Activated naive CD8-positive, alpha-beta T cell treated with anti-CD3 and anti-CD28 coated beads, Interleukin-2, amount 10 ng/mL, durations not matched to agents 7 days and 5 days (primary cell): ENCODE measurements at regions of chr5 and their contacts with region 1.

Region 1: GRCh38 chr5:42950440-42951292 is 89.5 kb downstream of the ANXA2R start:
- DNase-seq: peak; percentile 35
- ATAC-seq: peak; percentile 38
- H3K4me3 Mint-ChIP-seq: peak overlapping the region; percentile 96
- H3K27ac Mint-ChIP-seq: peak overlapping the region; percentile 100
- H3K4me1 Mint-ChIP-seq: peaks cover 20% of the 10 kb centered on the region
- H3K27me3 Mint-ChIP-seq: no peaks in the 10 kb centered on the region

Region 2: GRCh38 chr5:42908509-42909488 is 41.9 kb before region 1 on chr5:
- POLR2A ChIA-PET with region 1: interaction called, 28 read pairs
- DNase-seq: peak; percentile 84
- ATAC-seq: peak; percentile 91
- H3K4me3 Mint-ChIP-seq: peak overlapping the region; percentile 82
- H3K27ac Mint-ChIP-seq: peak overlapping the region; percentile 55
- H3K4me1 Mint-ChIP-seq: peaks cover 11% of the 10 kb centered on the region
- H3K27me3 Mint-ChIP-seq: peaks cover 24% of the 10 kb centered on the region

Region 3: GRCh38 chr5:42927730-42928129 is 22.9 kb before region 1 on chr5:
- POLR2A ChIA-PET with region 1: no interaction called
- DNase-seq: no peak
- ATAC-seq: no peak
- H3K4me3 Mint-ChIP-seq: no peak overlapping the region
- H3K27ac Mint-ChIP-seq: no peak overlapping the region
- H3K4me1 Mint-ChIP-seq: no peaks in the 10 kb centered on the region
- H3K27me3 Mint-ChIP-seq: peaks cover 8% of the 10 kb centered on the region

Region 4: DNA sequence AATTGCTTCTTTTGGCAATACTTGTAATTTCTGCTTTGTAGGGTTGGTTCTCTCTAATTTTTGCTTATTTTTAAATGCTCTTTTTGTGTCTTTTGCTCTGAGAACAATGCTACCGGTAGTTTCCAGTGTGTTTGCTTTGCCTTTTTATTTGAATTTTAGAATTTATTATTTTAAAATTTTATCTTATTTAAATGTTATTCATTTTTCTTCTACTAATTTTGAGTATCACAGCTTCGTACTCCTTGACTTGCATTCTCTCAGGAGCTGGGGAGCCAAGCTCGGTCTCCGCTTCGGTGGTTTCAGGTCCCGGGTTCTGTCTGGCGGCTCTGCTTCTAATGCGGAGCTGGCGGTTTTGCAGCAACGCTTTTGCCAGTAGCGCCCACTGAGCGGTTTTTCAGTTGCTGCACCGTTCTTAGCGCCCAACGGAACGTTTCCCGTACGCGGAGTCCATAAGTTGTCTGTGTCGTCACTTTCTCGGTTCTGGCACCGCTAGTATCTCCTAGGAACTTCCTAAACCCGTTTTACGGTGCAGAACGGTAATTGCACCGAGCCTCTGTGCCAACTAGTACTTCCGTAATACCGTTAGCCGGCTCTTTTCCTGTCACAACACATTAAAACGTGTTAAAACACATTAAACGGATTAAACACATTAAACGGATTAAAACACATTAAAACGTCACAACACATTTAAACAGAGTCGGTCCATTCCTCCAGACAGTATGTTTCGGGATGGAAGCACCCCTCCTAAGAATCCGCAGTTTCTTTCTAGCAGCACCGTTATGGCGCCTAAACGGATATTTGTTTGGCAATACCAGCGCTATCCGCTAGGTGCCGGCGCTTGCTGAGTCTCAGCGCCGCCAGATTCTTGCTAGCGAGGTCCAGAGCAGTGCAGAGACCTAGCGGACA is 43.8 kb after region 1 on chr5:
- POLR2A ChIA-PET with region 1: interaction called, 303 read pairs
- DNase-seq: peak; percentile 84
- ATAC-seq: peak; percentile 59
- H3K4me3 Mint-ChIP-seq: peak overlapping the region; percentile 98
- H3K27ac Mint-ChIP-seq: peak overlapping the region; percentile 98
- H3K4me1 Mint-ChIP-seq: peaks cover 23% of the 10 kb centered on the region
- H3K27me3 Mint-ChIP-seq: no peaks in the 10 kb centered on the region

Region 5: GRCh38 chr5:43008369-43009153 is 57.9 kb after region 1 on chr5:
- POLR2A ChIA-PET with region 1: interaction called, 91 read pairs
- DNase-seq: peak; percentile 88
- ATAC-seq: peak; percentile 61
- H3K4me3 Mint-ChIP-seq: peak overlapping the region; percentile 90
- H3K27ac Mint-ChIP-seq: peak overlapping the region; percentile 99
- H3K4me1 Mint-ChIP-seq: peaks cover 35% of the 10 kb centered on the region
- H3K27me3 Mint-ChIP-seq: no peaks in the 10 kb centered on the region

Region 6: DNA sequence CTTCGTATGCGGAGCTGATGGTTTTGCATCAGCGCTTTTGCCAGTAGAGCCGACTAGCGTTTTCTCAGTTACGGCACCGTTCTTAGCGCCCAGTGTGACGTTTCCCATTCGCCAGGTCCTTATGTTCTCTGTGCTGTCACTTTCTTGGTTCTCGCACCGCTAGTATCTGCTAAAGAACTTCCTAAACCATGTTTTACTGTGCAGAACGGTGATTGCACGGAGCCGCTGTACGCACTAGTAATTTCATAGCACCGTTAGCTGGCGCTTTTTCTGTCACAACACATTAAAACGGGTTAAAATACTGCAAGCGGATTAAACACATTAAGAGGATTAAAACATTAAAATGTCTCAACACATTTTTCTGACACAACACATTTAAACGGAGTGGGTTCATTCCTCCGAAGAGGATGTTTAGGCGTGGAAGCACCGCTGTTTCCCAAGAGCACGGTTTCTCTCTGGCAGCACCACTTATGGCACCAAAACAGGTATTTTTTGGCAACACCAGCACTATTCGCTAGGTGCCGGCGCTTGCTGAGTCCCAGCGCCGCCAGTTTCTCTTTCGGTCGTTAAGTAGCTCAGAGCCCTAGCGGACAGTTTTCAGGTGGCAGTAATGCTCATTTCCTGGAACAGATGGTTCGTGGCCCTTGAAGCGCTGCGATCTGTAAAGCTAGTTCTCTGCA is 69.1 kb after region 1 on chr5:
- POLR2A ChIA-PET with region 1: interaction called, 107 read pairs
- DNase-seq: peak; percentile 75
- ATAC-seq: peak; percentile 72
- H3K4me3 Mint-ChIP-seq: peak overlapping the region; percentile 97
- H3K27ac Mint-ChIP-seq: peak overlapping the region; percentile 100
- H3K4me1 Mint-ChIP-seq: peaks cover 27% of the 10 kb centered on the region
- H3K27me3 Mint-ChIP-seq: no peaks in the 10 kb centered on the region

Region 7: DNA sequence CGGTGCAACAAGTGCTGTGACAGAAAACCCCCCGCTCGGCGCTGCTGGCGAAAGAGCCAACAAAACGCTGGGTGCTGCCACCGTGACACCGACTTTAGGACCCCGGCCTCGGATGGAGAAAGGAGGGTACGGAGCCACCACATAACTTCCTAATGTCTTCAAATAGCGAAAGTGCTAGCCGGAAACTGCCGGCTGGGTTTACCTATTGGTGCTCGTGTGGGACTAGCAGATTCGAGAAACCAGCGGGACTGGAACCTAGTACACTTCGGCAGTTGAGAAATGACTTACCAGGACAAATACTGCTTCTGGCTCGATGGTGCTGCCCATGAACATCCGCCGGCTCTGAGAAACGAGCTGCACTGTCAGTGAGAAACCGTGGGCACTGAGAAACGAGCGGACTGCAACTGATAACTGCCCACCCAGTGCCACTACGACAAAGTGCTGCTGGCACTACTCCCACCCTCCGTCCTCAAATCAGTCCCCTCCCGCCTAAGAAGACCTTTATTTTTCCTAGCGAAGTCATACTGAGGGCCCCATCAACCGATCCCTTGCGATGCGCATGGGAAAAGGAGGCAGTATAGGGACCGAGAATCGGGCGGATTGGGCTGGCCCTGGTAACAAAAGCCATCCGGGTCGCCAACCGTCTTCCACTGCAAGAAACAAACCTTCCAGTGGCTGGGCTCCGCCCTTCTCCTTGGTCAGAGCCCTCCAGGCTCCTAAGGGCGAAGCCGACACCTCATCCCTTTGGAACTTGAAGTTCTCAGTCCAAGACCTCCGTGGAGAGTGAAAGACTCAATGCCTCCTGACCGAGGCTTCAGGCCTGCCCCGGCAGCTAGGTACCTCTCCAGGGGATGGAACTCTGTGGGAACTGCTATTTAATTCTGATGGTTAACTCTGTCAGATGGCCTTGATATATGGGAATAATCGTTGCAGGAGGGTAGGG is 116.4 kb after region 1 on chr5:
- POLR2A ChIA-PET with region 1: interaction called, 78 read pairs
- DNase-seq: peak; percentile 85
- ATAC-seq: peak; percentile 39
- H3K4me3 Mint-ChIP-seq: peak overlapping the region; percentile 99
- H3K27ac Mint-ChIP-seq: peak overlapping the region; percentile 100
- H3K4me1 Mint-ChIP-seq: peaks cover 30% of the 10 kb centered on the region
- H3K27me3 Mint-ChIP-seq: no peaks in the 10 kb centered on the region